ENCODE measurements at regions of chr1 and their contacts with region 1.

Region 1: GRCh38 chr1:115112496-115113375 is 23.4 kb upstream of the TSPAN2 start:
- DNase-seq: peak; percentile 79
- ATAC-seq: peak; percentile 92
- H3K4me3 Mint-ChIP-seq: peak overlapping the region; percentile 41
- H3K27ac Mint-ChIP-seq: peak overlapping the region; percentile 70
- H3K4me1 Mint-ChIP-seq: peaks cover 28% of the 10 kb centered on the region
- H3K27me3 Mint-ChIP-seq: peaks cover 5% of the 10 kb centered on the region
- CTCF ChIP-seq: peak; percentile 89

Region 2: GRCh38 chr1:115089420-115090185 is 23.1 kb before region 1 on chr1 and contains the start of gene TSPAN2:
- CTCF ChIA-PET with region 1: interaction called, 26 read pairs
- POLR2A ChIA-PET with region 1: interaction called, 4 read pairs
- DNase-seq: peak; percentile 95
- ATAC-seq: peak; percentile 91
- H3K4me3 Mint-ChIP-seq: peak within 1 kb of the TSS; percentile 92
- H3K27ac Mint-ChIP-seq: peak within 1 kb of the TSS; percentile 90; the same call in 1 of the 2 replicates
- H3K4me1 Mint-ChIP-seq: peaks cover 36% of the 10 kb centered on the region
- H3K27me3 Mint-ChIP-seq: peaks cover 16% of the 10 kb centered on the region
- CTCF ChIP-seq: no peak
- total RNA-seq, gene TSPAN2: 12.0 to 14.8 TPM (median 14.6 TPM) in 3 replicates

Region 3: GRCh38 chr1:115098979-115099692 is 13.6 kb before region 1 on chr1:
- CTCF ChIA-PET with region 1: interaction called, 14 read pairs
- POLR2A ChIA-PET with region 1: interaction called, 3 read pairs
- DNase-seq: no peak
- ATAC-seq: peak; percentile 63
- H3K4me3 Mint-ChIP-seq: no peak overlapping the region
- H3K27ac Mint-ChIP-seq: peak overlapping the region; percentile 86
- H3K4me1 Mint-ChIP-seq: peaks cover 28% of the 10 kb centered on the region
- H3K27me3 Mint-ChIP-seq: no peaks in the 10 kb centered on the region
- CTCF ChIP-seq: no peak

Region 4: DNA sequence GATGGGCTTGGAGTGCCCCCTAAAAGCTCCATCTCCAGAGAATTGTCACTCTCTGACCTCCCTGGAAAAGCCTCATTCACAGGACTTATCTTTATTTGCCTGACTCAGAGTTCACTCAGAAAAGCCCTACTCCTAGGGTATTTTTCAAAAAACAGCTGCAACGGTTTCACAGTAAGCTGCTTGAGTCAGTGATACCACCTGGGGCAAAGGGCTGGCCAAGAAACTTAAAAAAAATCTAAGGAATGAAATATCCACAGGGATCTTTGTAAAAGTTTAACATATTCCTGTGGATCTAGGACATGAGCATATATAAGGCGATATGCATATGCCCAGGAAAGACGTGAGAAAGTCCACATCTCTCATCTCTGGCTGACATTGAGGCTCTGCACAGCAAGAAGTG is 10.4 kb after region 1 on chr1:
- CTCF ChIA-PET with region 1: interaction called, 12 read pairs
- POLR2A ChIA-PET with region 1: no interaction called
- DNase-seq: no peak
- ATAC-seq: no peak
- H3K4me3 Mint-ChIP-seq: no peak overlapping the region
- H3K27ac Mint-ChIP-seq: no peak overlapping the region
- H3K4me1 Mint-ChIP-seq: peaks cover 3% of the 10 kb centered on the region; the same call in 1 of the 2 replicates
- H3K27me3 Mint-ChIP-seq: no peaks in the 10 kb centered on the region; the same call in 1 of the 2 replicates
- CTCF ChIP-seq: no peak

Measured in WTC11 (cell line).